K562 (cell line): ENCODE measurements at regions of chr15 and their contacts with region 1.

Region 1: DNA sequence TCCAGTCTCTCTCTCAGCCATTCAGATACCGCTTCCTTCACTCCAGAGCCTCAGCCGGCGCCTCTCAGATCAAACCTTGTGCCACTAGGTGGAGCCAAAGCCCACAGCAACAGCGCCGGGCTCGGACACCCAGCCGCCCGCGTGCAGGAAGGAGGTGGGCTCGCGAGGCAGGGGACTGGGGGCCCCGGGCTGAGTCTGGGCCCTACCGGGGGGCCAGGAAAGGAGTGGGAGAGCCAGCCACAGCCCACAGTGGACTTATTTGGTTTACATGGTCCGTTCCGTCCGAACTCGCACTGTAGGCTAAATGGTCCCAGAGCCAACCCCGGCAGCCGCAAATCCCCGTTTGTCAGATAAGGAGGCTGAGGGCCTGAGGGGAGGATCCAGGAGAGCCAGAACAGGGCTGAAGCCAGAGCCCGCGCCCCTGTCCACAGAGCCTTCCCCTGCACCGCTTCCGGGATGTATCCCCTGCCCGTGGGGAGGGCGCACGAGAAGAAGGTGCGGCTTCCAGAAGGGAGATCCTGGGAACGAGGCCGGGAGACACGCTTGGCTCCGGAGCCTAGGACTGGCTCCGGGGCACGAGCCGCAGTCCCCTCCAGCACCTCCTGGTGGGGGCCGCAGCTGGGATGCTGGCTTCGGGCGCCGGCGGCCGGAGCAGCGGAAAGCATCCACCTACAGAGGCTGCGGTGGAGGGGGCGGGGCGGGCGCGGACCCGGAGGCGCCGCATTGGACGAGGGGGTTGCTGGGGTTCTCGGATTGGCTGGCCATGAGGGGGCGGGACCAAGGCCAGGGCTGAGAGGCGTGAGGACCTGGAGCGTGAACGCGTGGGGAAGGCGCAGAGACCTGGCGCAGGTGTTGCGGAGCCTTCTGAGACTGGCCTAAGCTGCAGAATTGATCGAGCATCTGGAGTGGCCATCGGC is 6.5 kb upstream of the CYP11A1 start:
- DNase-seq: peak; percentile 95 to 100 (median 100)
- ATAC-seq: peak; percentile 99
- H3K4me3 ChIP-seq: peak overlapping the region; percentile 41
- H3K27ac ChIP-seq: peak overlapping the region; percentile 12; the same call in 1 of the 3 replicates
- H3K4me1 ChIP-seq: peaks cover 16 to 20% of the 10 kb centered on the region in 2 experiments
- H3K27me3 ChIP-seq: peaks cover 9 to 10% of the 10 kb centered on the region in 2 experiments; a peak in 3 of 5 replicates
- CTCF ChIP-seq: peak; percentile 91 to 95 (median 93)
- EP300 ChIP-seq: no peak
- POLR2A ChIP-seq: no peak
- RAD21 ChIP-seq: peak; percentile 93 to 94

Region 2: DNA sequence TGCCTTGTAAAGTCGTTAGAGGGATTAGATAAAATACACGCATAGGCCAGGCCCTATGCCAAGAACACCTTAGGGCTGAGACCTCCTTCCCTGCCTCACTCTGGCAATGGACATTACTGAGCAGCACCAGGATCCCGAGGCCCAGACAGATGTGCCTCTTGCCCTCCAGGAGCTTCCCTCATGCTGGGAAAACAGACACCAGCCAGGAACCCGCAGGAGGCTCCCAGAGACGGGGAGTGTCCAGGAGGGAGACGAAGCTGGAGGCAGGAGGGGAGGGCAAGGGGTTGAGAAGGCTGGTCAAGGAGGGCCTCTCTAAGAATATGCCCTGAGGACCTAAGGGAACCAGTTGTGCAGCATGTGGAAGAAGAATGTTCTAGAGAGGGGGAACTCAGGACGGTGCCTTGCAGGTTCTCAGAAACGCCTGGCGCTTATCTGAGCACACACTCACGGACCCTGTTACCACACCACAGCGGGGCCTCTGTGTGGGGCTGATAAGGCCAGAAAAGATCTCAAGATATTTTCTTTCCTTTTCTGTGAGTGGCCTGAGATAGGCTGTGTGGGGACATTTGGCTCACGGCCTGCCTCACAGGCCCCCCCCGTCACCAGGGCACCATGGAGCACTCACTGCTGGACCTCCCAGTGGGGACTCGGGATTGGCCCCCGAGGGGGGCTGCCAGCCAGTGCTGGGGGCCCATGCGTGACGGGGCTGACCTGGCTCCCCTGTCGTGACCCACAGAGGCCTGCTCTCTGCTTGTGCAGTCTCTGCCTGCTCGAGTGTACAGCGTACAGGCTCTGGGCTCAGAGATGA is 15.5 kb after region 1 on chr15:
- CTCF ChIA-PET with region 1: no interaction called
- POLR2A ChIA-PET with region 1: no interaction called
- in situ Hi-C with region 1: no loop called
- intact Hi-C with region 1: no loop called
- DNase-seq: peak; percentile 89 to 97 (median 92)
- ATAC-seq: peak; percentile 88
- H3K4me3 ChIP-seq: no peak overlapping the region
- H3K27ac ChIP-seq: peak overlapping the region; percentile 85
- H3K4me1 ChIP-seq: peaks cover 69 to 91% of the 10 kb centered on the region in 2 experiments
- H3K27me3 ChIP-seq: no peaks in the 10 kb centered on the region
- CTCF ChIP-seq: no peak
- EP300 ChIP-seq: peak; percentile 100
- POLR2A ChIP-seq: no peak
- RAD21 ChIP-seq: peak; percentile 26 to 39; a peak in 2 of 4 replicates

Region 3: DNA sequence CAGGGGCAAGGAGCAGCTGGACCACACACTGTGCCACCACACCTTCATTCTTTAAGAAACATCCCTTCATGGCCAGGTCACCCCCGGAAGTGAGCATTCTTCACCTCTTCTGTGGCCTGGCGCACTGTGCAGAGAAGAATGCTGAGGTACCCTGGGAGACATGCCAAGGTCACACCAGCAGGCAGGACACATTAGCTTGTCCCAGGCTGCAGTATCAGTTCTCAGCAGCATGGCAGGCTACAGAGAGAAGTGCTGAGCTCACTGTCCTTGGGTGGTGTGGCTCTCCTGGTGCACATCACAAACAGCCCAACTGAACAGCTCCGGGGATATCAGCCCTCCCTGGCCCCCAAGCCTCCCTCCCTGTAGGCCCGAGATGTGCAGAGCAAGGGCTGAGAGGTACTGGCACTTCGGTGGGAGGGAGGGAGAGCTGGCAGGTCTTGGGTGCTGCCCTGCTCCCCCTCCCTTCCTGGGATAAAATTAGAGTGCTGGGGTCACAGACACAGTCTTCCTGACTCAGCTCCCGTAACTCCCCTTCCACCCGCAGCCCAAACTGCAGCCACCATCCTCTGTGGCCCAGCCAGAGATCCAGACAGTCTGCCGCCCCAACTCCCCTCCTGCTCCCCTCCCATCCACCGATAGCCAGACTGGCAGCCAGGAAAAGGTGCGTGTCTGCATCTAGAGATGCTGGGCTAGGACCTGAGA is 46.4 kb after region 1 on chr15:
- CTCF ChIA-PET with region 1: no interaction called
- POLR2A ChIA-PET with region 1: no interaction called
- in situ Hi-C with region 1: no loop called
- intact Hi-C with region 1: no loop called
- DNase-seq: no peak
- ATAC-seq: peak; percentile 23
- H3K4me3 ChIP-seq: no peak overlapping the region
- H3K27ac ChIP-seq: no peak overlapping the region
- H3K4me1 ChIP-seq: peaks cover 46 to 68% of the 10 kb centered on the region in 2 experiments
- H3K27me3 ChIP-seq: no peaks in the 10 kb centered on the region
- CTCF ChIP-seq: no peak
- EP300 ChIP-seq: no peak
- POLR2A ChIP-seq: no peak
- RAD21 ChIP-seq: no peak

Region 4: GRCh38 chr15:74438721-74439316 is 64.8 kb after region 1 on chr15:
- CTCF ChIA-PET with region 1: interaction called, 28 read pairs
- POLR2A ChIA-PET with region 1: interaction called, 3 read pairs
- in situ Hi-C with region 1: no loop called
- intact Hi-C with region 1: no loop called
- DNase-seq: peak; percentile 75 to 87 (median 78)
- ATAC-seq: peak; percentile 82
- H3K4me3 ChIP-seq: no peak overlapping the region
- H3K27ac ChIP-seq: no peak overlapping the region
- H3K4me1 ChIP-seq: peaks cover 25 to 36% of the 10 kb centered on the region in 2 experiments
- H3K27me3 ChIP-seq: no peaks in the 10 kb centered on the region
- CTCF ChIP-seq: peak; percentile 95 to 97 (median 96)
- EP300 ChIP-seq: 0 out of 2 replicates have a peak, but pooled peaks have one; percentile 7
- POLR2A ChIP-seq: no peak
- RAD21 ChIP-seq: peak; percentile 99 to 100

Region 5: GRCh38 chr15:74489518-74490338 is 115.7 kb after region 1 on chr15:
- CTCF ChIA-PET with region 1: interaction called, 30 read pairs
- POLR2A ChIA-PET with region 1: no interaction called
- in situ Hi-C with region 1: no loop called
- intact Hi-C with region 1: loop called (anchors 2 kb)
- DNase-seq: peak; percentile 79 to 85 (median 82)
- ATAC-seq: peak; percentile 98
- H3K4me3 ChIP-seq: no peak overlapping the region
- H3K27ac ChIP-seq: peak overlapping the region; percentile 20; the same call in 1 of the 3 replicates
- H3K4me1 ChIP-seq: peaks cover 3 to 4% of the 10 kb centered on the region in 2 experiments; a peak in 3 of 5 replicates
- H3K27me3 ChIP-seq: no peaks in the 10 kb centered on the region
- CTCF ChIP-seq: peak; percentile 64 to 73 (median 68)
- EP300 ChIP-seq: no peak
- POLR2A ChIP-seq: no peak
- RAD21 ChIP-seq: peak; percentile 48 to 66

Region 6: DNA sequence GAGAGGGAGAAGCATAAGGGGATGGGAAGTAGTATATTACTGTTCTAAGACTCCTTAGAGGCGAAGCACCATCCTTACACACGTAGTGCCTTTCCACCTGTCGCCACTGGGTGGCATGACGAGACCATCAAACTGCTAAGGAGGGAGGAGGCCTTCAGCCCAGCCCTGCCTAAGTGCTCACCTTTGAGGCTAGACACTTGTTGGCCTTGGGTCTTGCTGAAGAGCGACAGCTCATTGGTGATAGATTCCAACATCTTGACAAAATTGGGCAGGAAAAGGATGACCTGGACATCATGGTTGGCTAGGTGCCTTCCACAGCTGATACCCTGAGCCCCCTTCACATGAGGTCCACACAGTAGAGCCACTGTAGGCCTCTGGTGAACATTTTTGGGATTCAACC is 261.2 kb after region 1 on chr15:
- CTCF ChIA-PET with region 1: interaction called, 32 read pairs
- POLR2A ChIA-PET with region 1: interaction called, 3 read pairs
- in situ Hi-C with region 1: no loop called
- intact Hi-C with region 1: loop called (anchors 1 kb)
- DNase-seq: peak; percentile 75 to 83 (median 76)
- ATAC-seq: peak; percentile 89
- H3K4me3 ChIP-seq: no peak overlapping the region
- H3K27ac ChIP-seq: no peak overlapping the region
- H3K4me1 ChIP-seq: no peaks in the 10 kb centered on the region; a peak in 1 of 5 replicates
- H3K27me3 ChIP-seq: no peaks in the 10 kb centered on the region
- CTCF ChIP-seq: peak; percentile 88 to 91 (median 90)
- EP300 ChIP-seq: no peak
- POLR2A ChIP-seq: no peak
- RAD21 ChIP-seq: peak; percentile 82 to 97

Region 7: DNA sequence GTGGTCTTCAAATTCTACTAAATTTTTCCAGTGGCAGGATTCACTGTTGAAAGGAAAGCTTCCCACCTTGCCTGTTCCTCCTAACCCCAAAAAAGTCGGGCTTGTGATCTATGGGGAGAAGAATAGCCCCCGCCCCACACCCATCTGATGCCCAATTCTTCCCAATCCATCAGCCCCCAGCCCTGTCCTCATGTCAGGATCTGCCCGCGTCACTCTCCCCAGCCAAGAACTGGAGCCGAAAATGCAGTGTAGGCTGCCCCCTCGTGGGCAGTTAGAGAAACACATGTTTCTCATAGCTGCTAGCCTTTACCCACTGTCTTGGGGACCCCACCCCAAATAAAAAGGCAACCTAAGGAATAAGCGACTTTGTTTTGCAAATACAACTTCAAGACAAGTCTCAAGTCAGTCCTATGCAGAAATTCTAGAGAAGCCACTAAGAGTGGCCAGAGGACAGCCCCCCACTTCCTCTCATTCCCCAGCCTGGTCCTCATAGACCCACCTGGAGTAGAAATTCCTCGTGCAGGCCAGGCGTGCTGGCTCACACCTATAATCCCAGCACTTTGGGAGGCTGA is 394.9 kb after region 1 on chr15:
- CTCF ChIA-PET with region 1: interaction called, 32 read pairs
- POLR2A ChIA-PET with region 1: no interaction called
- in situ Hi-C with region 1: loop called (anchors 5 kb)
- intact Hi-C with region 1: loop called (anchors 2 kb)
- DNase-seq: peak; percentile 72 to 80 (median 75)
- ATAC-seq: peak; percentile 75
- H3K4me3 ChIP-seq: no peak overlapping the region
- H3K27ac ChIP-seq: no peak overlapping the region
- H3K4me1 ChIP-seq: peaks cover 0 to 12% of the 10 kb centered on the region in 2 experiments; a peak in 1 of 5 replicates
- H3K27me3 ChIP-seq: peaks cover 4 to 27% of the 10 kb centered on the region in 2 experiments; a peak in 3 of 5 replicates
- CTCF ChIP-seq: peak; percentile 84 to 85 (median 84)
- EP300 ChIP-seq: no peak
- POLR2A ChIP-seq: no peak
- RAD21 ChIP-seq: peak; percentile 73 to 92

Region 8: DNA sequence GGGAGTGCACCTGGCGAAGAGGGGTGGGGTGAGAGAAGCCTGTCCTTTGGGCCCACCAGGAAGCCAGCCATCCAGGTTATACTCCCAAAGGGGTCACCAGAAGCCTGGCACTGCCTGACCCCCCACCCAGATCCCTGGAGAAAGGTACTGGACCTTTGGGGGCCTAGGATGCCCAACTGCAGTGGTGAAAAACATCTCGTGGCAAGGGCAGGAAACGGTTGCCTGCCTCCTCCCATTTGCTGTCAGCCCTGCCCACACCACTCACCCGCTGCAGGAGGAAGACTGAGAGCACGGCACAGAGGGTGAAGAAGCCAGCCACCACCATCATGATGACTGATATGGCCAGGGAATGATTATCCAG is 471.2 kb after region 1 on chr15:
- CTCF ChIA-PET with region 1: no interaction called
- POLR2A ChIA-PET with region 1: no interaction called
- in situ Hi-C with region 1: no loop called
- intact Hi-C with region 1: no loop called
- DNase-seq: no peak
- ATAC-seq: no peak
- H3K4me3 ChIP-seq: no peak overlapping the region
- H3K27ac ChIP-seq: no peak overlapping the region
- H3K4me1 ChIP-seq: peaks cover 19 to 41% of the 10 kb centered on the region in 2 experiments; a peak in 4 of 5 replicates
- H3K27me3 ChIP-seq: no peaks in the 10 kb centered on the region
- CTCF ChIP-seq: no peak
- EP300 ChIP-seq: no peak
- POLR2A ChIP-seq: no peak
- RAD21 ChIP-seq: no peak

Region 9: GRCh38 chr15:74956648-74957300 is 582.8 kb after region 1 on chr15 and contains the start of gene RPP25:
- CTCF ChIA-PET with region 1: no interaction called
- POLR2A ChIA-PET with region 1: no interaction called
- in situ Hi-C with region 1: no loop called
- intact Hi-C with region 1: loop called (anchors 10 kb)
- DNase-seq: peak; percentile 85 to 90 (median 88)
- ATAC-seq: peak; percentile 91
- H3K4me3 ChIP-seq: peak within 1 kb of the TSS; percentile 52
- H3K27ac ChIP-seq: peak within 1 kb of the TSS; percentile 68
- H3K4me1 ChIP-seq: peaks cover 36 to 63% of the 10 kb centered on the region in 2 experiments
- H3K27me3 ChIP-seq: peaks cover 23 to 32% of the 10 kb centered on the region in 2 experiments
- CTCF ChIP-seq: no peak
- EP300 ChIP-seq: no peak
- POLR2A ChIP-seq: peak; percentile 70; the same call in 1 of the 2 replicates
- RAD21 ChIP-seq: no peak
- polyA plus RNA-seq, gene RPP25: 1.1 to 1.3 TPM